ENCODE measurements at regions of chr11 and their contacts with region 1.

Region 1: GRCh38 chr11:82796998-82797964 is 63.6 kb upstream of the FAM181B start:
- DNase-seq: peak; percentile 48
- ATAC-seq: peak in 1 of 2 donors; percentile 53

Region 2: GRCh38 chr11:82610671-82611070 is 186.6 kb before region 1 on chr11:
- intact Hi-C with region 1: no loop called
- DNase-seq: no peak
- ATAC-seq: no peak

Region 3: DNA sequence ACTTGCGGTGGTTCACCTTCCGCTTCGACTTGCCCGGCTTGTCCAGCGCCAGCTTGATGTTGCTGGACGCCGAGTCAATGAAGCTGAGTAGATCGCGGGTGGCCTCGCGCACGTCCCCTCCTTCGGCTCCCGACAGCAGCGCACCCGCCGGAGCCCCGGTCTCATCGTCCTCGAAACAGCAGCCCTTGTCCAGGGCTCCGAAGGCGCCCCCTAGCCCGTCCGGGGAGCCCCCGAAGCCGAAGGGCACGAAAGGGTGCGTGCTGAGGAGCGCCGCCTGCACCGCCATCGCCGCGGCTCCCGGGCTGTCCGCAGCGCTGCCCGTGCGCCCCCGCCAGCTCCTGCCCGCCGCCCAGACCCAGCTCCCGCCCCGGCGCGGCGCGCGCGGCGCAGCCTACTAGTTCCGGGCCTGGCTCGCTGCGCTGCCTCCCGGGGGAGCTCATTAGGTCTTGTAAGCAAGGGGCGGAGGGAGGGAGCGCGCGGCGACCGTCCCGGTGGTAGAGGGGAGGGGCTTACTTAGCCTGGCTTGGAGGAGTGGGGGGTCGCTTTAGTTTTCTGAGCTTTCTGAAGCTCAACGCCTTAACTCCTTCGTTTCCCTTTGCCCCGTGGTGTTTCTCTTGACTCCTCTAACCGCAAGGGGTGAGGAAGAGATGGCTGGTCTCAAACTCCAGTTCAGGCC is 63.7 kb before region 1 on chr11 and contains the start of gene FAM181B:
- intact Hi-C with region 1: loop called in 1 of 2 experiments (anchors 5 kb)
- DNase-seq: peak; percentile 73
- ATAC-seq: peak; percentile 89 to 93
- total RNA-seq, gene FAM181B: 1.7 to 2.0 TPM

Region 4: DNA sequence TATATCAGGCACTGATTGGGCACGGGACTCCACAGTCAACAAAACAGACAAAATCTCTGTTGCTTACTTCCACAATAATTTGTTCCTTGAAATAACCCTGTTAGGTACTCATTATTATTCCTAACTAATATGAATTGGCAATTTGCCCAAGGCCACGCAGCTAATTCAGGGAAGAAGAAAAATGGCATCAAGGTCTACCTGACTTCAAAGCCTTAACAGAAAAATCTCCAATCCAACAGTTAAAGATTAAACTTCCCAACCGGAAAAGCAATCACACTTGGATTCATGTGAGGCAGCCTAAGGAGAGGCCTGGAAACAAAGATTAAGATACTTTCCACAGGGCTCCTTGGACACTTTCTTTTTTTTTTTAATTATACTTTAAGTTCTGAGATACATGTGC is 34.1 kb after region 1 on chr11:
- intact Hi-C with region 1: no loop called
- DNase-seq: no peak
- ATAC-seq: no peak

Region 5: GRCh38 chr11:83033972-83034672 is 236.8 kb after region 1 on chr11:
- intact Hi-C with region 1: no loop called
- DNase-seq: peak; percentile 36
- ATAC-seq: peak; percentile 85 to 88

Measured in left cardiac atrium (tissue), 4 donors.